ENCODE measurements at regions of chr5 and their contacts with region 1.

Region 1: GRCh38 chr5:142888469-142889085 is 118.4 kb downstream of the ARHGAP26 start:
- DNase-seq: no peak
- H3K4me3 ChIP-seq: no peak overlapping the region
- H3K27ac ChIP-seq: no peak overlapping the region
- H3K4me1 ChIP-seq: peaks cover 0 to 3% of the 10 kb centered on the region in 2 donors
- H3K27me3 ChIP-seq: no peaks in the 10 kb centered on the region
- CTCF ChIP-seq: peak; percentile 70 to 79 (median 75)

Region 2: DNA sequence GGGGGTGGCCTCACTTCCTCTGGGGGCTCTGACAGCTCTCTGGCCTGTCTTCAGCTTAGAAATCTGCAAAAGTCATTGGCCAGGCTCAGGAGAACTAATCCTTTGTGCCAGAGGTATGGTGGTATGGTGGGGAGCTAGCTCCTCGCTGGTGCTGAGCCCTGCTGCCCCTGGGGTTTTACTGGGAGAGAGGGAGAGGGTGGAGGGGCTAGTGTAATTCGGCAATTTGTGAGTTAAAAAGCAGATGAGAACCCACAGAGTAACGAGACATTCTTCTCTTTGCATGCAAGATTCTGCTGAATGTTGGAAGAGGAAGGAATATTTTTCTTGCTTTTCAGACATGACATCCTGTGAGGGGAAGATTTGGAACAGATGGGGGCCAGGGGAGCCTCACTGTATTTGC is 498.2 kb before region 1 on chr5:
- intact Hi-C with region 1: no loop called
- DNase-seq: no peak
- H3K4me3 ChIP-seq: no peak overlapping the region
- H3K27ac ChIP-seq: no peak overlapping the region
- H3K4me1 ChIP-seq: peaks cover 0 to 6% of the 10 kb centered on the region in 2 donors
- H3K27me3 ChIP-seq: no peaks in the 10 kb centered on the region
- CTCF ChIP-seq: no peak

Region 3: GRCh38 chr5:142600611-142601358 is 287.8 kb before region 1 on chr5:
- intact Hi-C with region 1: loop called (anchors 10 kb)
- DNase-seq: peak; percentile 20 to 80
- H3K4me3 ChIP-seq: peak overlapping the region; percentile 10 to 32
- H3K27ac ChIP-seq: peak overlapping the region; percentile 68
- H3K4me1 ChIP-seq: peaks cover 0 to 16% of the 10 kb centered on the region in 2 donors
- H3K27me3 ChIP-seq: no peaks in the 10 kb centered on the region
- CTCF ChIP-seq: no peak

Region 4: GRCh38 chr5:143033535-143034250 is 145.1 kb after region 1 on chr5:
- intact Hi-C with region 1: no loop called
- DNase-seq: no peak
- H3K4me3 ChIP-seq: no peak overlapping the region
- H3K27ac ChIP-seq: no peak overlapping the region
- H3K4me1 ChIP-seq: no peaks in the 10 kb centered on the region
- H3K27me3 ChIP-seq: no peaks in the 10 kb centered on the region
- CTCF ChIP-seq: no peak